Naive thymus-derived CD4-positive, alpha-beta T cell (primary cell): ENCODE measurements at regions of chr15 and their contacts with region 1.

Region 1: DNA sequence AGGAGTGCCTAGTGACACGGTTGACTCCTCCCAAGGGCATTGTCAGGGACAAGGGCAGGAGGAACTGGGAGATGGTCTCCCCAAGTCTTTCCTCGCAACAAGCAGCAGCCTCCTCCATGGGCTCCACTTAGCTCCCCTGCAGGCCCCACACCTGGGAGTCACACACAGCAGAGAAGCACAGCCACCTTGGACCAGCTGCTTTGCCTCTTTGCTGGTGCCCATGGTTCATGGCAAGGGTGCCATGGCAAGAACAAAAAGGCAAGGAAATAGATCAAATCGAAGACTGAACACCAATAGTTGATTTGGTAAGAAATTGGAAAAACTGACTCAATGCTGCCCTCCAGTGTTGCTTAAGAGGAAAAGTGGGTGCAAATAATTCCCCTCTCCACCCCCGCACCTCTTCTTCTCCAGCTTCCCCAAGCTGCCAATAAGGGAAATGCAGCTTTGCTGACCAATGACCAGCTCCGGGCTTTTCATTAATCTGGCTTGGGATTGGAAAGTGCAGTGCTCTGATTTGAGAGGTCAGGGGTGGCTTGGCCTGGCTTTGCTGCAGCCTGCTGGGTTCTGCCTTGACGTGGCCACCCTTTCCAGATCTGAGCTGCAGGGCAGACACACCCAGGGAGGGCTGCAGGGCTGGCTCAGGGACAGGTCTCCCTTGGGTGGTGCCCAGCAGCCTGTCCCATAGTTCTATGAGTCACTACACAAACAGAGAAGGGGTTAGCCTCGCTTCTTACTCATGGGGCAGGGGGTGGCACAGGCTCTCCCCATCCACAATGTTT is 162.0 kb downstream of the KLF13 start:
- DNase-seq: peak; percentile 25 to 70 (median 64)
- ATAC-seq: peak; percentile 78
- H3K4me3 ChIP-seq: no peak overlapping the region
- H3K4me3 Mint-ChIP-seq: peak overlapping the region in 2 of 10 donors; percentile 47 to 65
- H3K27ac ChIP-seq: no peak overlapping the region
- H3K27ac Mint-ChIP-seq: peak overlapping the region in 6 of 9 donors; percentile 14 to 87 (median 68)
- H3K4me1 ChIP-seq: peaks cover 23 to 26% of the 10 kb centered on the region in 2 donors
- H3K4me1 Mint-ChIP-seq: peaks cover 14 to 71% (median 28%) of the 10 kb centered on the region in 7 donors
- H3K27me3 ChIP-seq: no peaks in the 10 kb centered on the region
- H3K27me3 Mint-ChIP-seq: no peaks in the 10 kb centered on the region

Region 2: GRCh38 chr15:30991255-30992072 is 497.2 kb before region 1 on chr15 and contains the start of gene MTMR10:
- CTCF ChIA-PET with region 1: no interaction called
- POLR2A ChIA-PET with region 1: interaction called, 4 read pairs
- intact Hi-C with region 1: loop called (anchors 1 to 2 kb)
- DNase-seq: peak; percentile 54 to 84 (median 82)
- ATAC-seq: peak; percentile 96
- H3K4me3 ChIP-seq: peak within 1 kb of the TSS; percentile 96
- H3K4me3 Mint-ChIP-seq: peak within 1 kb of the TSS; percentile 91 to 97 (median 95)
- H3K27ac ChIP-seq: peak within 1 kb of the TSS; percentile 89
- H3K27ac Mint-ChIP-seq: peak within 1 kb of the TSS; percentile 90 to 98 (median 93)
- H3K4me1 ChIP-seq: peaks cover 23 to 27% of the 10 kb centered on the region in 2 donors
- H3K4me1 Mint-ChIP-seq: peaks cover 22 to 49% (median 37%) of the 10 kb centered on the region in 7 donors
- H3K27me3 ChIP-seq: no peaks in the 10 kb centered on the region
- H3K27me3 Mint-ChIP-seq: peaks cover 0 to 13% (median 0%) of the 10 kb centered on the region in 5 donors
- total RNA-seq, gene MTMR10: 21.2 to 50.8 (median 34.0) TPM

Region 3: GRCh38 chr15:31200735-31201151 is 287.9 kb before region 1 on chr15:
- CTCF ChIA-PET with region 1: interaction called, 117 read pairs
- POLR2A ChIA-PET with region 1: interaction called, 6 read pairs
- intact Hi-C with region 1: loop called (anchors 1 kb)
- DNase-seq: peak; percentile 45 to 81 (median 72)
- ATAC-seq: peak; percentile 77
- H3K4me3 ChIP-seq: no peak overlapping the region
- H3K4me3 Mint-ChIP-seq: no peak overlapping the region
- H3K27ac ChIP-seq: no peak overlapping the region
- H3K27ac Mint-ChIP-seq: peak overlapping the region in 3 of 9 donors; percentile 4 to 77 (median 38)
- H3K4me1 ChIP-seq: peaks cover 0 to 31% of the 10 kb centered on the region in 2 donors
- H3K4me1 Mint-ChIP-seq: peaks cover 10 to 48% (median 36%) of the 10 kb centered on the region in 7 donors
- H3K27me3 ChIP-seq: no peaks in the 10 kb centered on the region
- H3K27me3 Mint-ChIP-seq: peaks cover 0 to 33% (median 0%) of the 10 kb centered on the region in 5 donors

Region 4: DNA sequence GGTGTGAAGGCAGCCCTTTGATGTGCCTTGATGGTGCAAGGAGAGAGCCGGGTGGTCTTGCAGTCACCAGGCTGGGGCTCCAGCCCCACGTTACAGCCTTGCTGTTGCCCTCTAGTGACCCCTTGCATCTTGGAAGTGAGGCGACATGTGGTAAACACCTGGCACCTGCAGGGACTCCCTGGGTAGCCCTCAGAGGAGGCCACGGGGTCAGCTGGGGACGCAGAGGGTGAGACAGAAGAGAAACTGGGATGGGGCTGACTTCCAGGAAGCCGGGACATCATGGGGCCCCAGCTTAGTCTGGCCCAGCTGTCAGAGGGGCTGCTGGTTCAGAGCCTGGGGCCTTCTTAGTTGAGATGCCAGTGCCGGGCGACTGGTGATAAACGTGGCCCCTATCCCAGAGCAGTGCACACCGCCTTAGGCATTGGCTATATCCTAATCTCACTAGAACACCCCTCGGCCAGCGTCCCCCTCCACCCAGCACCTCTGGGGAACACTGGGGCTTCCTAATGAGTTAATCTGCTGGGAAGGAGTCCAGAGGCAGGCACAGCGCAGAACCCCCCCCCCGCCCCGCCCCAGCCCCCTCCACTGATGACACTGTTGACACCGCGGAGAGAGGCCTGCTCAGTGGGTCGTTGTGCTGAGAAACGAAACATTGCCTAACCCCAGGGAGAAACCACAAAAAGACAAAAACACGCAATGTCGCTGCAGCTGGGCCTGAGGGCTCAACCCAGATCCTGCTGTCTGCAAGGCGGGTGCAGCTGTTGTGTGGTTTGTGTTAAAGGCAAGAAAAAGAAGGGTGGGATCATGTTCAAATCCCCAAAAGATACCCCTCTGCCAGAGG is 222.5 kb before region 1 on chr15:
- CTCF ChIA-PET with region 1: interaction called, 12 read pairs
- POLR2A ChIA-PET with region 1: interaction called, 4 read pairs
- intact Hi-C with region 1: loop called in 1 of 2 experiments (anchors 2 kb)
- DNase-seq: peak; percentile 43 to 90 (median 86)
- ATAC-seq: peak; percentile 84
- H3K4me3 ChIP-seq: peak overlapping the region; percentile 24
- H3K4me3 Mint-ChIP-seq: peak overlapping the region; percentile 71 to 95 (median 78)
- H3K27ac ChIP-seq: peak overlapping the region; percentile 81
- H3K27ac Mint-ChIP-seq: peak overlapping the region; percentile 94 to 100 (median 96)
- H3K4me1 ChIP-seq: peaks cover 48 to 88% of the 10 kb centered on the region in 2 donors
- H3K4me1 Mint-ChIP-seq: peaks cover 62 to 99% (median 96%) of the 10 kb centered on the region in 7 donors
- H3K27me3 ChIP-seq: no peaks in the 10 kb centered on the region
- H3K27me3 Mint-ChIP-seq: no peaks in the 10 kb centered on the region

Region 5: DNA sequence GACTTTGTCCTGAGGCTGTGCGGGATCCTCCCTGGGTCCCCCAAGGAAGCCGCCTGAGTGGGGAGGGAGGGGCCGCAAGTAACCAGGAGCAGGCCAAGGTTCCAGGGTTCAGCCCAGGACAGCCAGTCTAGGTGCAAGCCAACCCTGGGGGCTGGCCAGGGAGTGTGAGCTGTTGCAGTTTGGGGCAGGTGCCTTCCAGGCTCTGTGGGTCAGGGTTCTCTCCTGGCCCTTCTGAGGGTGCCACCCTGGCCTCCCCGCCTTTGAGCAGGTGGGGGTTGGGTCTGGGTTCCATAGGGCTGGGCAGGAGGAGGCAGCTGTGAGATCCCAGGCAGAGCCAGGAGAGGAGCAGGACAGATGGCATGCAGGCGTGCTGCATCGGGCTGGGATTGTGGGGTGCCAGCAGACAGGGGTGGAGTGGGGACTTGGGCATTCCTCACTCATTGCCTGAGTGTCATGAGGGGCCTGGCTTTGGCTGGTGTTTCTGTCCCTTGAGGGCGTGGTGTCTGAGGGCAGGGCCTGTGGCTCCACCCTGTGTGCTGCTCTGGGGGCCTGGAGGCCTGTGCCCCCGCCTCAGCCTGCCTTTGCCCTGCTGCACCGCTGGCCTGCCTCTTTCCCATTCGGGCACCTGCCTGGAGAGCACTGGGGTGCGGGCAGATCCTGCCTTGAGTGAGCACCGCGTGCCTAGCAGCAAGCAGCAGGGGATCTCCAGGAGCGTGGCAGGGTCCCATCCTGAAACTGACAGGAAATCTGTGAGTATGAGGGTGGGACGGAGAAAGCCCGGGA is 143.6 kb before region 1 on chr15:
- CTCF ChIA-PET with region 1: interaction called, 5 read pairs
- POLR2A ChIA-PET with region 1: interaction called, 11 read pairs
- intact Hi-C with region 1: no loop called
- DNase-seq: no peak
- ATAC-seq: no peak
- H3K4me3 ChIP-seq: peak overlapping the region; percentile 44
- H3K4me3 Mint-ChIP-seq: peak overlapping the region; percentile 75 to 94 (median 85)
- H3K27ac ChIP-seq: peak overlapping the region; percentile 94
- H3K27ac Mint-ChIP-seq: peak overlapping the region; percentile 75 to 99 (median 97)
- H3K4me1 ChIP-seq: peaks cover 98 to 100% of the 10 kb centered on the region in 2 donors
- H3K4me1 Mint-ChIP-seq: peaks cover 79 to 100% (median 98%) of the 10 kb centered on the region in 7 donors
- H3K27me3 ChIP-seq: no peaks in the 10 kb centered on the region
- H3K27me3 Mint-ChIP-seq: no peaks in the 10 kb centered on the region

Region 6: DNA sequence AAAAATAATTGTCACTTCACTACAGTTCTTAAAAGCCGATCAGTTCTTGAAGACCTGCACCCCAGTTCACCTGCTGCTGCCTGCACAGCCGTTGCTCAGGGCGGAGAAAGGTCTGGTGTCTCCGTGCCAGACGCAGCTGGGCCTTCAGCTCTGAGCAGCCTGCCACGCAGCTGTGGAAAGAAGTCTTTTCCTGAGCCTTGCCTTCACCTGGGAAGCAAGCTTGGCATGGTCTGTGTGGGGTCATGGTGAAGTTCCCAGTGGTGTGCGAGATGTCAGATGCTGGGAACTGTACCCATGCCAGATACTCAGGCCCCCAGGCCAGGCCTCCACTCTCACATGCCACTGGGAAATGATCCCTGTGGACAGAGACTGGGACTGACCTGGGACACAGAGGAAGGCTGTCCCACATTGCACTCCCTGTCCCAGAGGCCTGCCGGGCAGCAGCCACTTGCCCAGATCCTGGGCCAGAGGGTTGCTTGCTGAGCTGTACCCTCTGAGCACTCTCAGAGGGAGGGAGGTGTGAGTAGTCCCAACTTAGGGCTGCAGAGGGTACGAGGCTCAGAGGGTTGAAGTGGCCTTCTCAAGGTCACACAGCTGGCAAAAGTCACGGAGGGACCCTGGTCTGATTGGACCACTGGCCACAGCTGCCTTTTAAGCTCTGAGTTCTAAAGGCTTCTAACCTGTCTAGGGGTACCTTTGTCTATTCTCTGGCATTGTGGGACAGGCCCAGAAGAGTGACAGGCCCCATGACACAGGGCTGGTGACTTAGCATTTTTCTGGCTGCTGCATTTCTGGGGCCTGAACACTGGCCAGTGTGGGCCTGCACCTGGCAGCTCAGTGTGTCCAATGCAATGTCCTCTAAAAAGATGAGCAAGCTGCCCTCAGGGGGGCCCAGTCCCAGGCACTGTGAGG is 106.6 kb before region 1 on chr15:
- CTCF ChIA-PET with region 1: interaction called, 6 read pairs
- POLR2A ChIA-PET with region 1: interaction called, 11 read pairs
- intact Hi-C with region 1: loop called (anchors 5 kb)
- DNase-seq: no peak
- ATAC-seq: peak; percentile 5
- H3K4me3 ChIP-seq: no peak overlapping the region
- H3K4me3 Mint-ChIP-seq: no peak overlapping the region
- H3K27ac ChIP-seq: no peak overlapping the region
- H3K27ac Mint-ChIP-seq: peak overlapping the region in 8 of 9 donors; percentile 32 to 86 (median 64)
- H3K4me1 ChIP-seq: peaks cover 33 to 35% of the 10 kb centered on the region in 2 donors
- H3K4me1 Mint-ChIP-seq: peaks cover 29 to 68% (median 48%) of the 10 kb centered on the region in 7 donors
- H3K27me3 ChIP-seq: no peaks in the 10 kb centered on the region
- H3K27me3 Mint-ChIP-seq: no peaks in the 10 kb centered on the region

Region 7: DNA sequence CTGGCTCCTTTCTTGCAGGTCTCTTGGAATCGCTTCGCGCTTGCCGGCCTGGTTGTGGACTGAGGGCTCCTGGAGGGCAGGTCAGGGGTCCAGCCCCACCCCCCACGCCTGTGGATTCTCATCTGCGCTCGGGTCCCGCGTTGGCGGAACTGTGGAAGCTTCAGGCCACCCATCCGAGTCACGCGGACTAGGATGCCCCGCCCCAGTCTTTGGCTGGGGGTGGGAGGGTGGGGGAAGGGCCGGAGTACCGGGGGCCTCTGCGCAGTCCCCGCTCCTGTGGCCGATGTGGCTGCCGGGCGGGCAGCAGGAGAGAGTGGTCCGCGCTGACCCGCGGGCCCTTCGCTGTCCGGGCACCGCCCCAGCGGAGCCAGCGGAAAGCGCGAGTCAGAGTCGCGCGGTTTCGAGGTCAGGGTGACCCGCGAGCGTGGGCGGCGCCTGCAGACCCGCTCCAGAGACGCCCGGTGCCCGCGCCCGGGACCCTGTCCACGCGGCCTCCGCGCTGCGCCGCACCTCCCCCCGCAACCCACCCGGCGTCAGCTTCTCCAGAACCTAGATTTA is 47.8 kb before region 1 on chr15:
- CTCF ChIA-PET with region 1: interaction called, 65 read pairs
- POLR2A ChIA-PET with region 1: interaction called, 54 read pairs
- intact Hi-C with region 1: loop called (anchors 1 kb)
- DNase-seq: peak in 3 of 9 donors; percentile 31 to 74 (median 42)
- ATAC-seq: peak; percentile 63
- H3K4me3 ChIP-seq: peak overlapping the region; percentile 43
- H3K4me3 Mint-ChIP-seq: peak overlapping the region; percentile 65 to 87 (median 77)
- H3K27ac ChIP-seq: peak overlapping the region; percentile 64
- H3K27ac Mint-ChIP-seq: peak overlapping the region; percentile 51 to 100 (median 84)
- H3K4me1 ChIP-seq: peaks cover 32 to 50% of the 10 kb centered on the region in 2 donors
- H3K4me1 Mint-ChIP-seq: peaks cover 22 to 71% (median 58%) of the 10 kb centered on the region in 7 donors
- H3K27me3 ChIP-seq: no peaks in the 10 kb centered on the region
- H3K27me3 Mint-ChIP-seq: no peaks in the 10 kb centered on the region

Region 8: DNA sequence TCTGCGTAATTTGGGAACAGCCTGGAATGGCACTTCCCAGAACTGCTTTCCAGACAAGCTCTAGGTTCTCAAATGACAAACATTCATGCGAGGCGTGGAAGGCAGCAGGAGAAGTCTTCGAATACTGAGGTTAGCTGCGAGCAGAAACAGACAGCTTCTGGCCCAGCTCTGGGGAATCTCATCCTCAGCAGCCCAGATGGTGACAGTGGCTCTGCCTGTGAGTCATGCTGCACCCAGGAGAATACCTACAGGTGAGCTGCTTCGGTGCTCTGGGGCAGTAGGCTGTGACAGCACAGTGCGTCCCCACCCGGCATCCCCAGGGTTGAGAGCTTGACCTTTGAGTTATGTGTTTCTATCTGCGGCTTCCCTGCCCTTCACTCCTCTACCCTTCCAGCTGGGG is 96.6 kb after region 1 on chr15:
- CTCF ChIA-PET with region 1: no interaction called
- POLR2A ChIA-PET with region 1: no interaction called
- intact Hi-C with region 1: no loop called
- DNase-seq: no peak
- ATAC-seq: no peak
- H3K4me3 ChIP-seq: no peak overlapping the region
- H3K4me3 Mint-ChIP-seq: no peak overlapping the region
- H3K27ac ChIP-seq: no peak overlapping the region
- H3K27ac Mint-ChIP-seq: no peak overlapping the region
- H3K4me1 ChIP-seq: no peaks in the 10 kb centered on the region
- H3K4me1 Mint-ChIP-seq: no peaks in the 10 kb centered on the region
- H3K27me3 ChIP-seq: peaks cover 0 to 4% of the 10 kb centered on the region in 2 donors
- H3K27me3 Mint-ChIP-seq: peaks cover 0 to 25% (median 19%) of the 10 kb centered on the region in 5 donors